WTC11 (cell line): ENCODE measurements at regions of chr1 and their contacts with region 1.

Region 1: GRCh38 chr1:54310439-54311328 is 95.5 kb downstream of the SSBP3 start:
- DNase-seq: peak; percentile 84
- ATAC-seq: peak; percentile 56
- H3K4me3 Mint-ChIP-seq: peak overlapping the region; percentile 51
- H3K27ac Mint-ChIP-seq: peak overlapping the region; percentile 97
- H3K4me1 Mint-ChIP-seq: peaks cover 94% of the 10 kb centered on the region
- H3K27me3 Mint-ChIP-seq: no peaks in the 10 kb centered on the region
- CTCF ChIP-seq: no peak

Region 2: GRCh38 chr1:54227091-54227602 is 83.5 kb before region 1 on chr1:
- CTCF ChIA-PET with region 1: interaction called, 11 read pairs
- POLR2A ChIA-PET with region 1: interaction called, 5 read pairs
- DNase-seq: no peak
- ATAC-seq: no peak
- H3K4me3 Mint-ChIP-seq: no peak overlapping the region
- H3K27ac Mint-ChIP-seq: no peak overlapping the region
- H3K4me1 Mint-ChIP-seq: peaks cover 24% of the 10 kb centered on the region
- H3K27me3 Mint-ChIP-seq: no peaks in the 10 kb centered on the region
- CTCF ChIP-seq: no peak

Region 3: GRCh38 chr1:54273092-54273794 is 37.4 kb before region 1 on chr1:
- CTCF ChIA-PET with region 1: interaction called, 59 read pairs
- POLR2A ChIA-PET with region 1: interaction called, 5 read pairs
- DNase-seq: peak; percentile 52
- ATAC-seq: peak; percentile 67
- H3K4me3 Mint-ChIP-seq: no peak overlapping the region
- H3K27ac Mint-ChIP-seq: peak overlapping the region; percentile 75
- H3K4me1 Mint-ChIP-seq: peaks cover 49% of the 10 kb centered on the region
- H3K27me3 Mint-ChIP-seq: no peaks in the 10 kb centered on the region
- CTCF ChIP-seq: no peak

Region 4: GRCh38 chr1:54324251-54325140 is 13.8 kb after region 1 on chr1:
- CTCF ChIA-PET with region 1: interaction called, 10 read pairs
- POLR2A ChIA-PET with region 1: interaction called, 6 read pairs
- DNase-seq: no peak
- ATAC-seq: peak; percentile 8
- H3K4me3 Mint-ChIP-seq: no peak overlapping the region
- H3K27ac Mint-ChIP-seq: peak overlapping the region; percentile 71
- H3K4me1 Mint-ChIP-seq: peaks cover 95% of the 10 kb centered on the region
- H3K27me3 Mint-ChIP-seq: no peaks in the 10 kb centered on the region
- CTCF ChIP-seq: no peak

Region 5: DNA sequence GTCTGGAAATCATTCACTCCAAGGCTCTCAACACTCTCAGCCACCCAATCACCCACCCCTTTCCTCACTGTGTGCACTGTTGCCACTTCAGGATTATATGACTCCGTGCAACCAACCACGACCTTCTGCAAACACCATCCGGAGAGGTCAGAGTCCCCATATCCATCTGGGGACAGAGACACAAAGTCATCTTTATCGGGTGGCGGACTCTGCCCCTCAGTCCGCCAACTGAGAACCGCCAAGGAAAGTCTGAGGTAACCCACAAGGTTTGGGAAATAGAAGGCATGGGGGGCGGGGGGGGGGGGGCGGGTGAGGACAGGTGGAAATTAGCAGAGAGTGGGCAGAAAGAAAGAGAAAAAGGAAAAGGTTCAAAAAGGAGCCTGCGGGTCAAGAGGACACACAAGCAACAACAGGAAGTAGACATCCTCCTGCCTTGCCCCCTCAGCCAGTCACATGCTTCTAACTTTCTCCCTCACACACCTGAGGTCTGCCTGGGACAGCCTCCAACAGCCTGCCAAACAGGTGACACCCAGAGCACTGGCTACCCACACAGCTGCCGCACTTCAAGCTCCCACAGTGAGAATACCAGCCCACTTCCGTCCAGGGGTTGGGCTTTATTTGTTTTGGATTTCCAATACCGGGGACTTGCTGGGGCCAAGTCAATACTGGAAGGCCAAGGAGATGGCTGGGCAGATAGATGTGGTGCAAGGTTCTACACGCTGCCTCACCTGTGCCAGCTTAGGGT is 37.4 kb after region 1 on chr1:
- CTCF ChIA-PET with region 1: interaction called, 10 read pairs
- POLR2A ChIA-PET with region 1: interaction called, 6 read pairs
- DNase-seq: no peak
- ATAC-seq: no peak
- H3K4me3 Mint-ChIP-seq: no peak overlapping the region
- H3K27ac Mint-ChIP-seq: peak overlapping the region; percentile 45; the same call in 1 of the 2 replicates
- H3K4me1 Mint-ChIP-seq: peaks cover 81% of the 10 kb centered on the region
- H3K27me3 Mint-ChIP-seq: no peaks in the 10 kb centered on the region
- CTCF ChIP-seq: no peak

Region 6: DNA sequence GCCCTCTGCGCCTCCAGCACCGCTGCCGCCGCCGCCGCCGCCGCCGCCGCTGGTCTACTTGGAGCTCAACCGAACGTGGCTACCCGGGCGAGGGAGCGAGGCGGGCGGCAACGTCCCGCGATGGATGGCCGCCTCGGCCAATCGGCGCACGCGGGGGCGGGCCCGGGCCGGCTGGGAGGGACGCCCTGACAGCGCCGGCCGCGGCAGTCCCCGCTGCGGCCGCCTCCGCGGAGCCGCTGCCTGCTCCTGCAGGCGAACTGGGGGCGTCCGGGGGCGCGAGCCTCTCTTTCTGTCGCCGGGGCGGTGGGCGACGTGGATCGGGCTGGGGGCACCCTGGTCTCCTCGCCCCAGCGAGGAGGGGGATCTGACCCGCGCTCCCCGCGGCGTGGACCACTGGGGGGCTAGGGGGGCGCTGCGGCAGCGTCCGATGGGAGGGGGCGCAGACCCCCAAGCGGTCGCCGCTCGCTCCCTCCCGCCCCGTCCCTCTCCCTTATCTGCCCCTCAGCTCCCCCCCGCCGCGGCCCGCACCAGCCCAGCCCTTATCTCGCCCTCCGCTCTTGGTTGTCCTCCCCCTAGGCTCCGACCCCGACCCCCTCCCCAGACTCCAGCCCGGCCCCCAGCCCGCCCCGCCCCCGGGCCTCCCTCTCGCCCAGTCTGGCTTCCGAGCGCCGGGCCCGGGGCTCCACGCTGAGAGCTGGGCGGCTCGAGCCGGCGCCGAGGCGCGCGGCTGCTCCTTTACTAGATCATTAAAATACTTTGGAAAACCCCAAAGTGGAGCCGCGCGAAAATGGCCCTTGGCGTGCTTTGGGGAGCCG is 95.9 kb after region 1 on chr1 and contains the start of gene SSBP3:
- CTCF ChIA-PET with region 1: interaction called, 13 read pairs
- POLR2A ChIA-PET with region 1: interaction called, 40 read pairs
- DNase-seq: peak; percentile 92
- ATAC-seq: peak; percentile 81
- H3K4me3 Mint-ChIP-seq: peak within 1 kb of the TSS; percentile 88
- H3K27ac Mint-ChIP-seq: peak within 1 kb of the TSS; percentile 99
- H3K4me1 Mint-ChIP-seq: peaks cover 69% of the 10 kb centered on the region
- H3K27me3 Mint-ChIP-seq: peaks cover 6% of the 10 kb centered on the region; the same call in 1 of the 2 replicates
- CTCF ChIP-seq: no peak
- total RNA-seq, gene SSBP3: 98.8 to 115 TPM (median 105 TPM) in 3 replicates

Region 7: GRCh38 chr1:54488779-54489626 is 178.3 kb after region 1 on chr1:
- CTCF ChIA-PET with region 1: interaction called, 44 read pairs
- POLR2A ChIA-PET with region 1: interaction called, 9 read pairs
- DNase-seq: peak; percentile 91
- ATAC-seq: peak; percentile 49
- H3K4me3 Mint-ChIP-seq: peak overlapping the region; percentile 81
- H3K27ac Mint-ChIP-seq: peak overlapping the region; percentile 86
- H3K4me1 Mint-ChIP-seq: peaks cover 32% of the 10 kb centered on the region
- H3K27me3 Mint-ChIP-seq: peaks cover 13% of the 10 kb centered on the region
- CTCF ChIP-seq: peak; percentile 95